ENCODE measurements at regions of chr10 and their contacts with region 1.

Region 1: DNA sequence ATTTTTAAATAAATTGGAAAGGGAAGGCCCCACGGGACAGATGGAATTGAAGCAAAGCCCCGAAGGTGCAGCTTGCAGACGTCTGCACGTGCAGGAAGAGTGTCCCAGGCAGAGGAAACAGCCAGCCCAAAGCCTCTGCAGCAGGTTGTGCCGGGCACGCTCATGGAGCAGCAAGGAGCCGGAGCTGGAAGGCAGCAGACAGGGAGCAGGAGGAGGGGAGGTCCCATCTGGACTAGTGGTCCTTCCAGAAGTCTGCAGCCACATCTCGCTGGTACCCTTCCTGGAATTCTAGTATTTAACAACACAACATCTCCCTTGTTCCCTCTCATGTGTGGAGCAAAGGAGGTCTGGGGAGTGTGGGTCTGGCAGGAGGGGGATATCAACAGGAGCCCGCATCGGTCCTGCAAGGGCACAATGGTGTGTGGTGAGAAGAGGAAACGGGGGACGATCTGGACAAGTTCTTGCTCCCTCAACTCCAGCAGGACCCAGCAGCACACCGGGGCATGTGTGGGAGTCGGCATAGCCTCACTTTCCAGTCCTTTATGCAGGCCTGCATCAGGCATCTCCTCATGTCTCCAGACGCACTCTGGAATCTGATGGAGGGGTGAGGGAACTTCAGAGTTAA is 169.3 kb downstream of the GRID1 start:
- DNase-seq: peak; percentile 33
- ATAC-seq: no peak

Region 2: GRCh38 chr10:86880971-86881370 is 683.7 kb after region 1 on chr10:
- intact Hi-C with region 1: loop called (anchors 5 kb)
- DNase-seq: no peak
- ATAC-seq: no peak

Measured in sciatic nerve (tissue), 2 donors.